B cell (primary cell): ENCODE measurements at regions of chr4 and their contacts with region 1.

Region 1: DNA sequence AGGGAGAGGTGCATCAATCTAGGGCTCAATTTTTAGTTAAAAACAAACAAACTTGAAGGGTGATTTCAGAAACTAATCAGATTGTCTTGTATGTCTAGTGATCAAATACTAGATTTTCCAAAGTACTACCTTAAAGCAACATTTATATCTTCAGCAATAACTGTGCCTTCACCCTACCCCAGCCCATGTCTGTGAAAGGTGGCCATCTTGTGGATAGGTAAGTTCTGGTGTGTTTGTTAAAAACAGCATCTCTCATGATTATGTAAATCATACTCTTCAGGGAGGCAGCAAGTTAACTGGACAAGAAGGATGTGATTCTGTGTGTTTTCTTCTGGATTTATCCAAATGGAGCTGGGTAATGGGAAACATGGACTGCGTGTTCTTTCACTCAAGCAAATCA is 81.4 kb upstream of the ACSL1 start:
- DNase-seq: peak; percentile 30
- ATAC-seq: peak; percentile 80
- H3K4me3 ChIP-seq: no peak overlapping the region
- H3K4me3 Mint-ChIP-seq: no peak overlapping the region
- H3K27ac ChIP-seq: no peak overlapping the region
- H3K27ac Mint-ChIP-seq: no peak overlapping the region
- H3K4me1 ChIP-seq: no peaks in the 10 kb centered on the region
- H3K4me1 Mint-ChIP-seq: peaks cover 4% of the 10 kb centered on the region
- H3K27me3 ChIP-seq: no peaks in the 10 kb centered on the region
- H3K27me3 Mint-ChIP-seq: peaks cover 1% of the 10 kb centered on the region
- CTCF ChIP-seq: peak; percentile 38

Region 2: GRCh38 chr4:184487513-184487912 is 419.7 kb before region 1 on chr4:
- CTCF ChIA-PET with region 1: no interaction called
- POLR2A ChIA-PET with region 1: no interaction called
- intact Hi-C with region 1: no loop called
- DNase-seq: no peak
- ATAC-seq: no peak
- H3K4me3 ChIP-seq: no peak overlapping the region
- H3K4me3 Mint-ChIP-seq: no peak overlapping the region
- H3K27ac ChIP-seq: no peak overlapping the region
- H3K27ac Mint-ChIP-seq: no peak overlapping the region
- H3K4me1 ChIP-seq: peaks cover 16 to 21% of the 10 kb centered on the region in 2 donors
- H3K4me1 Mint-ChIP-seq: peaks cover 31% of the 10 kb centered on the region
- H3K27me3 ChIP-seq: no peaks in the 10 kb centered on the region
- H3K27me3 Mint-ChIP-seq: no peaks in the 10 kb centered on the region
- CTCF ChIP-seq: no peak

Region 3: GRCh38 chr4:184782731-184783373 is 124.4 kb before region 1 on chr4:
- CTCF ChIA-PET with region 1: interaction called, 10 read pairs
- POLR2A ChIA-PET with region 1: no interaction called
- intact Hi-C with region 1: no loop called
- DNase-seq: peak; percentile 60
- ATAC-seq: peak; percentile 65
- H3K4me3 ChIP-seq: peak overlapping the region; percentile 2 to 57 (median 46)
- H3K4me3 Mint-ChIP-seq: peak overlapping the region; percentile 85
- H3K27ac ChIP-seq: peak overlapping the region; percentile 44 to 48
- H3K27ac Mint-ChIP-seq: peak overlapping the region; percentile 86
- H3K4me1 ChIP-seq: peaks cover 11 to 19% of the 10 kb centered on the region in 2 donors
- H3K4me1 Mint-ChIP-seq: peaks cover 23% of the 10 kb centered on the region
- H3K27me3 ChIP-seq: no peaks in the 10 kb centered on the region
- H3K27me3 Mint-ChIP-seq: no peaks in the 10 kb centered on the region
- CTCF ChIP-seq: no peak

Region 4: DNA sequence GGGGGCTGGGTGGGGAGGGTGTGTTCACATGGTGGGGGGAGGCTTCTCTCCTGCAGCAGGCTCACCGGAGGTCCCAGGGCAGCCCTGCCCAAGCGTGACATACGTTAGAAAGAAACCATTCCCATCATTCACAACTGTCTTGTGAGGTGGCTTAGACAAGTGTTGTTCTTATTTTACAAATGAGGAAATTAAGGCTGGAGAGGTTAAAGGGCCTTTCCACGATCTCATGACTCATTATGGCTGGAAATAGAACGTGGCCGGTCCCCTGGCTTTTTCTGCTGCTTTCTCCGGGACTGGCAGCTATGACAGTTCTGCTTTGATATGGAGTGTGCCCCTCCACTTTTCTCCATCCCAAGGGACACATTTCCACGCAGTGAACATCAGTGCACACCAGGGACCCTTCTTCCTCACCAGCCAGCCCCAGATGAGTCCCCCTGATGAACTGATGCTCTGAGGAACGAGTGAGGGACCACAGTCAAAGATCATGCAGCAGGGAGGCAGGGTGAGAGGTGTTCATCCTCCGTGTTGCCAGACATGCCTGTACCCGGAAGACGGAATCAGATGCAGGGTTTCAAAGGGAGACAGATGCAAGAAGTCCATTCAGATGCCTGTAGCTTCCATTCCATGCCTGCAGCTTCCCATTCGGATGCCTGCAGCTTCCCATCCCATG is 17.4 kb before region 1 on chr4:
- CTCF ChIA-PET with region 1: no interaction called
- POLR2A ChIA-PET with region 1: no interaction called
- intact Hi-C with region 1: no loop called
- DNase-seq: no peak
- ATAC-seq: peak; percentile 33
- H3K4me3 ChIP-seq: no peak overlapping the region
- H3K4me3 Mint-ChIP-seq: no peak overlapping the region
- H3K27ac ChIP-seq: no peak overlapping the region
- H3K27ac Mint-ChIP-seq: no peak overlapping the region
- H3K4me1 ChIP-seq: no peaks in the 10 kb centered on the region
- H3K4me1 Mint-ChIP-seq: peaks cover 7% of the 10 kb centered on the region
- H3K27me3 ChIP-seq: peaks cover 0 to 4% (median 1%) of the 10 kb centered on the region in 4 experiments
- H3K27me3 Mint-ChIP-seq: peaks cover 4% of the 10 kb centered on the region
- CTCF ChIP-seq: no peak